ENCODE measurements at regions of chr7 and their contacts with region 1.

Region 1: DNA sequence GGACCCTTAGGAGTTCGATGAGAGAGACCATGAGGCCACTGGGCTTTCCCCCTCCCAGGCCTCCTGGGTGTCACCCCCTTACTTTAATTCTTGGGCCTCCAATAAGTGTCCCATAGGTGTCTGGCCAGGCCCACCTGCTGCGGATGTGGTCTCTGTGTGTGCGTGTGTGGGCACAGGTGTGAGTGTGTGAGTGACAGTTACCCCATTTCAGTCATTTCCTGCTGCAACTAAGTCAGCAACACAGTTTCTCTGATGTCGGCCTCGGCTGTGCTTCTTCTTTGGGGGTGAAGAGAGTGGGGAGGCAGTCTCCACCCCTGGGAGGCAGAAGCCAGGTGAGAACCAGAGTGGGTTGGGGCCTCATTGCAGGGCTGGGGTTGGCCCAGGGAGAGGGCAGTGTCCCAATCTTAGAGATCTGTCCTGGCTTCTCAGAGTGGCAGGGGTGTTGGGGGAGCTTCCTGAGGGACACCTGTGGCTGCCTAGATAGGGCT is 1.5 kb downstream of the PVRIG start:
- DNase-seq: peak; percentile 72
- H3K4me3 Mint-ChIP-seq: peak overlapping the region; percentile 96
- H3K27ac Mint-ChIP-seq: peak overlapping the region; percentile 99
- H3K4me1 Mint-ChIP-seq: peaks cover 60% of the 10 kb centered on the region
- H3K27me3 Mint-ChIP-seq: no peaks in the 10 kb centered on the region

Region 2: DNA sequence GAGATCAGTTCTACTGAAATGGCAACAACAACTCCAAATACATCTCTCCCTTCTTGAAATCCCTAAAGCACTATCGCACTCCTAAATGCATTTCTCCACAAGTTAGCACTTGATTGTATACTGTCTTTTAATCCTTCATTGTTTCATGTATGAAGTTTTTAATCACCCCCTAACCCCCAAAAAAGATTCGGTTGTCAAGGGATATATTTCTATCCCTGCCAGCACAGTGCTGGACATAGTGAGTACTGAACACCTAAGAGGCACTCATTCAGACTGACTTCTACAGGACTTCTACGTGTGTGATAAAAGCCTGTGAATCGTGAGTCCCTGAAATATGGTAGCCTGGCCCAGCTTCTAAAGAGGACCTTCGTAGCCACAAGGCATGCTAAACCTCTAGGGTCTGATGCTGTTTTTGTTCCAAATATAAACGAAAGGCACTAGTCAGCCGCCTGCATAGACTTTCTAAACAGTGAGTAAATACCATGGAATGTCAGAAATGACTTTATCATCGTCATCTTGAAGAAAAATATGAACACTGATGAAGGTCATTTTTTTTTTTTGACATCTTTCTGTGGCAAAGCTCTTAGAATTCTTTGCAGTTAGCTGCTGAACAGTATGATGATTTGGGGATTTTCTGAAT is 186.3 kb before region 1 on chr7:
- intact Hi-C with region 1: no loop called
- DNase-seq: no peak
- H3K4me3 Mint-ChIP-seq: no peak overlapping the region
- H3K27ac Mint-ChIP-seq: no peak overlapping the region
- H3K4me1 Mint-ChIP-seq: no peaks in the 10 kb centered on the region
- H3K27me3 Mint-ChIP-seq: no peaks in the 10 kb centered on the region

Region 3: GRCh38 chr7:100148559-100149350 is 72.5 kb before region 1 on chr7 and contains the start of gene LAMTOR4:
- intact Hi-C with region 1: loop called (anchors 1 kb)
- DNase-seq: peak; percentile 99
- H3K4me3 Mint-ChIP-seq: peak within 1 kb of the TSS; percentile 97
- H3K27ac Mint-ChIP-seq: peak within 1 kb of the TSS; percentile 94
- H3K4me1 Mint-ChIP-seq: peaks cover 24% of the 10 kb centered on the region
- H3K27me3 Mint-ChIP-seq: no peaks in the 10 kb centered on the region
- total RNA-seq, gene LAMTOR4: 119 and 133 TPM in 2 replicates

Region 4: GRCh38 chr7:100190048-100190711 is 31.1 kb before region 1 on chr7:
- intact Hi-C with region 1: loop called (anchors 1 kb)
- DNase-seq: no peak
- H3K4me3 Mint-ChIP-seq: no peak overlapping the region
- H3K27ac Mint-ChIP-seq: peak overlapping the region; percentile 8
- H3K4me1 Mint-ChIP-seq: peaks cover 29% of the 10 kb centered on the region
- H3K27me3 Mint-ChIP-seq: no peaks in the 10 kb centered on the region

Region 5: DNA sequence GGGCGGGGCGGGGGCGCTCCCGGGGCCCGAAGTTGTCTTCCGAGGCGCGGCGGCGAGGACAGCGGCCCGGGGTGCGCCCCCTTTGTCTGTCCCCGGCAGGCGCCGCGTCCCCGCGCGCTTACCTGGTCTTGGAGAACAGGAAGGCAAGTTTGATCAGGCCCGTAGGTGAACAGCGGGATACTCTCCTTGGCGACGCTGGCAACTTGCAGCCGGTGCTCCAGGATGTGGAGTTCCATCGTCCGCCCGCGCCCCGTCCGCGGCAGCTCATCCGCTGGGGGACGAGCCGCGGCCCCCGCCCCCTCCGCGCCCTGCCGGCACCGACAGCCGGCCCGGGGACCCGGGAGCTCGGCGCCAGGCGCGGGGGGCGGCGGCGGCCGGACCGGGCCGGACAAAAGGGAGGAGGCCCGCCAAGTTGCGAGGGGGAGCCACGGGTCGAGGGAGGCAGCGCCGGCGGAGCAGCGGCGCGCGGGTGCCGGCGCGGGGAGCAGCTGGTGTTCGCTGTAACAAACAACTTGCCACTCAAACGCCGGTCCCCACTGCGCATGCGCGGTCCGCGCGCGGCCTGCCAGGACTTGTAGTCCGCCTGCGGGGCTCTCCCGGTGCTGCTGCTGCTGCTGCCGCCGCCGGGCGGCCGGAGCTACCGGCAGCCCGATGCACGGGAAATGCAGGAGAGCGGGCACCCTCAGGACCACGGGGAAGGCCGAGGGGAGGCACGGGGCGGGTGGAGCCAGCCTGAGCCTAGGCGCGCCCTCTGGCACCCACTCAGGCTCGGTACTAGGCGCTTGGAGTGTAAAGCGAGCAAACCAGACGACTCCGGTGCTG is 50.7 kb after region 1 on chr7:
- intact Hi-C with region 1: loop called (anchors 5 kb)
- DNase-seq: peak; percentile 98
- H3K4me3 Mint-ChIP-seq: peak overlapping the region; percentile 77
- H3K27ac Mint-ChIP-seq: peak overlapping the region; percentile 55
- H3K4me1 Mint-ChIP-seq: peaks cover 14% of the 10 kb centered on the region
- H3K27me3 Mint-ChIP-seq: peaks cover 2% of the 10 kb centered on the region

Region 6: GRCh38 chr7:100396421-100396982 is 175.2 kb after region 1 on chr7:
- intact Hi-C with region 1: loop called (anchors 2 kb)
- DNase-seq: peak; percentile 53
- H3K4me3 Mint-ChIP-seq: peak overlapping the region; percentile 51
- H3K27ac Mint-ChIP-seq: peak overlapping the region; percentile 84
- H3K4me1 Mint-ChIP-seq: peaks cover 22% of the 10 kb centered on the region
- H3K27me3 Mint-ChIP-seq: peaks cover 51% of the 10 kb centered on the region

Region 7: GRCh38 chr7:100694098-100694745 is 472.9 kb after region 1 on chr7 and contains the start of gene GIGYF1:
- intact Hi-C with region 1: no loop called
- DNase-seq: peak; percentile 66
- H3K4me3 Mint-ChIP-seq: peak within 1 kb of the TSS; percentile 94
- H3K27ac Mint-ChIP-seq: peak within 1 kb of the TSS; percentile 93
- H3K4me1 Mint-ChIP-seq: peaks cover 27% of the 10 kb centered on the region
- H3K27me3 Mint-ChIP-seq: peaks cover 27% of the 10 kb centered on the region
- total RNA-seq, gene GIGYF1: 49.1 and 53.8 TPM in 2 replicates

Measured in activated T-helper 1 cell treated with anti-CD3 and anti-CD28 coated beads, Interleukin-12 subunit alpha, Interleukin-12 subunit beta, Interleukin-2, Interleukin-4 antibody, amounts not matched to agents 30 ng/mL and 10 ng/mL and 1 ng/mL, durations not matched to agents 14 hours and 24 hours and 36 hours (primary cell).